Dendritic cell treated with granulocyte-macrophage colony-stimulating factor and Interleukin-4, amounts not matched to agents 40 ng/mL and 50 ng/mL, for 4 days (primary cell): ENCODE measurements at regions of chr9 and their contacts with region 1.

Region 1: DNA sequence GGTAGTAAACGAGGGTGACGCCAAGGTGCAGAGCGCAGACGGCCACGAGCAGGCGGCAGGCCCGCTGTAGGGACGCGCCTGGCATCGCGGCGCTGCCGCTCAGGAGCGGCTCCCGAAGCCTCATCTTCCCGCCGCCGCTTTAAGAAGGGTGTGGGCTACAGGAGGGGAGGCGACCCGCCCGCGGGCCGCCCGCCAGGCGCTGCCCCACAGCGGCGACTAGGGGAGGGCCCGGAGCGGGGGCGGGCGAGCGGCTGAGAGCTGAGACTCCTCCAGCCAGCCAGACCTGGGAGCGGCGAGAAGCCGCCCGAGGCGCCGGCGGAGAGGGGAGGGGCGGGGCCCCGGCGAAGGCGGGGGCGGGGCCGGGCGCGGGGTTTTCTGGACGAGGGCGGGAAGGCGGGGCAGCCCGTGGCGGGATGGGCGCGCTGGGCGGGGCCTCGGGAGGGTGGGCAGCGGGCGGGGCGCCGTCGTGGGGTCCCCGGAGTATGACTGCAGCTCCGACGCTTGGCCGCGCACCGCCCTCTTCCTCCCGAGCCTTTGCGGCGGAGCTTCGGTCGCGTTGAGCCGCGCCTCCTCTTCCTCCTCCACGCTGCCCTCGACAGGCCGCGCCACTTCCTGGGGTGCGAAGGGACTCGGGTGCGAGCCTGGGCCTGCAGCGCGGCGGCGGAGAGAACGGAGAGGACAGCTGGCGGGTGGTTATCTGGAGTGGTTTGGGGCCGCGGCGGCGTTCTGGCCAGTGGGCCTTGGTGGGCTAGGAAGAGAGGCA is at the start of gene B4GALT1:
- H3K4me3 Mint-ChIP-seq: peak within 1 kb of the TSS; percentile 91
- H3K27ac Mint-ChIP-seq: peak within 1 kb of the TSS; percentile 96
- H3K4me1 Mint-ChIP-seq: peaks cover 68% of the 10 kb centered on the region
- H3K27me3 Mint-ChIP-seq: no peaks in the 10 kb centered on the region

Region 2: DNA sequence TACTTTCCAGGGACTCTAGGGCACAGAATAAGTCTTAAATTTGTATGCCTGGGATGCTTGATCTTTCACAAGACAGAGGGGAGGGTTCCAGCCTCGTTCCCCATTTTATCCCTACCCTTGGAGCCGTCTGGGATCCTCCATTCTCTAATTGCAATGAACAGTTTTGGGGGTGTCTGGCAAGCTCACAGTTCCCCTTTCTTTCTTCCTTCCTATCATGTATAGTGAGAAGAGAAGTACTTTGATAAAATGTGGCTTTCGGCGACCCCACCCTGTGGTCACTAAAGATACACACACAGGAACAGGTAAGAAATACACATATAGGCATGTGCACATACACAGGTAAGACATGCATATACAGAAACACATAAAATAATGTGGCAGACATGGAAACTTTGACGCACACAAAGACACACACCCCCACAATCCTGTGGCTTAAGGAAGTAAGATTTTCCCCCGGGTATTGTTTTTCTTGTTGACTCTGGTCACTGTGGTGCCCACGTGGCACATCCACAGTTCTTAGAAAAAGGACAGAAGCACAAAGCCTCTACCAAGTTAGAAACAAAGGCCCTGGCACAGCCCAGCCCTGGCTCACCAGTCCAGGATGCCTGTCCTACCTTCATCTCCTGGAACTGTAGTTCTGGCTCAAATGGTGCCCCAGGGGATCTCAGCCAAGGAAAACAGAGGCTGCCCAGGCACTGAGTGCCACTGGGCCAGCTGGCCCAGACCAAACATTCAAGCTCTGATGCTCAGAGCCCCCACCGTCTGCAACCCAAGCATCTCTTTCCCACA is 84.5 kb before region 1 on chr9:
- intact Hi-C with region 1: loop called (anchors 2 kb)
- H3K4me3 Mint-ChIP-seq: peak overlapping the region; percentile 54
- H3K27ac Mint-ChIP-seq: no peak overlapping the region
- H3K4me1 Mint-ChIP-seq: peaks cover 12% of the 10 kb centered on the region
- H3K27me3 Mint-ChIP-seq: no peaks in the 10 kb centered on the region

Region 3: GRCh38 chr9:33116860-33117259 is 50.4 kb before region 1 on chr9:
- intact Hi-C with region 1: loop called (anchors 5 kb)
- H3K4me3 Mint-ChIP-seq: peak overlapping the region; percentile 37
- H3K27ac Mint-ChIP-seq: peak overlapping the region; percentile 91
- H3K4me1 Mint-ChIP-seq: peaks cover 32% of the 10 kb centered on the region
- H3K27me3 Mint-ChIP-seq: no peaks in the 10 kb centered on the region

Region 4: DNA sequence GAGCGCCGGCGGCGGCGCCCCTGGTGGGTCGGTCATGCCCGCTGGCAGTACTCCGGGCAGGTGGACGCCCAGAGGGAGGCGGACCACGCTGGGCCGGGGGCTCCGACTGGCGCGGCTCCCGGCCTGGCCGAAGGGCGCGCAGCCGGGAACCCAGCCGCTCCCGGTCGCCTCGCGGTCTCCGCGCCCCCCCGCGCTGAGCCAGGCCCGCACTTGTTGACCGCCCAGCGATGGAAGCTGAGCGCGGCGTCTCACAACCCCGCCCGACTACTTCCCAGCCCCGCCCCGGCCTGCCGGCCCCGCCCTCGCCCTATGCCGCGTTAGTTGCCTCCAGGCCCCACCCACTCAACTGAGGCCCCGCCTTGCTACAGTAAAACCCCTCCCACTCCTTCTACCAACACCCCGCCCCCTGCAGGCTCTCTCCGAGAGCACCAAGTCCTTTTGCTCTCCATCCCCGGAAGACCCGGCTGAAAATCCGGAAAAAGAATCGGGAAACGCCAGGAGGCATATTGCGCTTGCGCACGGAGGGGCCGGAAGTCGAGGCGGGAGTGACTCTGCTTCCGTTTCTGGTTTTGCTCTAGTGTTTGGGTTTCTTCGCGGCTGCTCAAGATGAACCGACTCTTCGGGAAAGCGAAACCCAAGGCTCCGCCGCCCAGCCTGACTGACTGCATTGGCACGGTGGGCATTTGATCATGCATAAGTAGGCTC is 97.4 kb after region 1 on chr9 and contains the starts of genes BAG1 and CHMP5:
- intact Hi-C with region 1: loop called (anchors 2 kb)
- H3K4me3 Mint-ChIP-seq: peak within 1 kb of the TSS; percentile 84
- H3K27ac Mint-ChIP-seq: peak within 1 kb of the TSS; percentile 93
- H3K4me1 Mint-ChIP-seq: peaks cover 41% of the 10 kb centered on the region
- H3K27me3 Mint-ChIP-seq: no peaks in the 10 kb centered on the region